Mammary epithelial cell (primary cell): ENCODE measurements at regions of chr6 and their contacts with region 1.

Region 1: DNA sequence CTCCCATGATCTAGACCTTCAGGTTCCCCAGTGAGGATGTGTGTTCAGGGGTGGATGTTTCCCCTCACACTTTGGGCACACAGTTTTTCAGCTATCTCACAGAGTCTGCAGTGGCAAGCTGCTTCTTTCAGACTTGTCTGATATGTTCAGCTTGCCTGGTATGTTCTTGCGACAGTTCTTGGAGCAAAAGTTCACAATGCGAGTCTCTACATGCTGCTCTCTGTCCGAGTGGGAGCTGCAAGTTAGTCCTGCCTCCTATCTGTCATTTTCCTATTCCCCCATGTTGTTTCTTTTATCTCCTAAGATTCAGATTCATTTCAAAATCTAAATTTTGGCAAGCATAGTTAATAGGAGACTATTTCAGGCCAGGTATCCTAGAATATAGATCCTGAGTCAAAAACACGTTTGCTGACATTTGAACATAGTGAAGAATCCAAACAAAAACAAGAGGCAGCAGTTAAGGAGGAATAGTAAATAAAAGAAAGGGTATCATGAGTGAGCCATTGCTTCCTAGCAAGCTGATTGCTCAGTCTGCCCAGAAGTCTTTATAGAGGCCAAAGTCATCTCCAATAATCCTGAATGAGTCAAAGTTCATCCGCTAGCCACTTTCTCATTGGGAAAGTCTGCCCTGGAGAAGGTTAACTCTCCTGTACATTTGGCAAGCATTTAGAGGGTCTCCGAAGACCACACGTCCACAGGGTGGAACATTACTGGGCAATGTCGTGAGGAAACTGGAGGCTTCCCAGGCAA is 140.2 kb upstream of the MOCS1 start:
- DNase-seq: peak; percentile 80
- H3K4me3 ChIP-seq: no peak overlapping the region
- H3K27ac ChIP-seq: peak overlapping the region; percentile 69
- H3K4me1 ChIP-seq: peaks cover 44% of the 10 kb centered on the region
- H3K27me3 ChIP-seq: no peaks in the 10 kb centered on the region
- CTCF ChIP-seq: peak in 1 of 2 donors; percentile 32

Region 2: DNA sequence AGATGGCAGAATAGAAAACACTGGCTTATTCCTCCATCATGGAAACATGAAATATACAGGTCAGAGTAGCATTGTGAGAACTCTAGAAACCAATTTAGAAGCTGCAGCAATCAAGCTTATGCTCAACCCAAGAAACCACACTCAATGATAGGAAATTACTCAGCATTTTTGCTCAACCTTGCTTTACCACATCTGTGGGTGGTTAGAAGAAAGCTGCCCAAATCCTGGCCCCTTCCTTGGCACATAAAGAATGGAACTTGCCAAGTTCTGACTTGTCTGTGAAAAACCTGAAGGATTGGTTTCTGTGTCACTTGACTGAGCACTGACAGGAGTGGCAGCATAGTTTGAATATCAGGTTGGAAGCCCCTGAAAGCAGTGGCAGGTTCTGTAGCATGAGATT is 32.2 kb before region 1 on chr6:
- CTCF ChIA-PET with region 1: no interaction called
- dilution Hi-C with region 1: no loop called
- in situ Hi-C with region 1: no loop called
- intact Hi-C with region 1: loop called (anchors 2 kb)
- DNase-seq: peak; percentile 95
- H3K4me3 ChIP-seq: no peak overlapping the region
- H3K27ac ChIP-seq: no peak overlapping the region
- H3K4me1 ChIP-seq: peaks cover 38% of the 10 kb centered on the region
- H3K27me3 ChIP-seq: no peaks in the 10 kb centered on the region
- CTCF ChIP-seq: no peak